Ovary (tissue), 10 donors: ENCODE measurements at regions of chr16 and their contacts with region 1.

Region 1: GRCh38 chr16:55364811-55365210 is 40.8 kb downstream of the IRX6 start:
- DNase-seq: no peak
- H3K4me3 ChIP-seq: no peak overlapping the region
- H3K27ac ChIP-seq: no peak overlapping the region
- H3K4me1 ChIP-seq: peaks cover 4% of the 10 kb centered on the region
- H3K27me3 ChIP-seq: no peaks in the 10 kb centered on the region
- CTCF ChIP-seq: no peak
- EP300 ChIP-seq: no peak
- POLR2A ChIP-seq: no peak

Region 2: DNA sequence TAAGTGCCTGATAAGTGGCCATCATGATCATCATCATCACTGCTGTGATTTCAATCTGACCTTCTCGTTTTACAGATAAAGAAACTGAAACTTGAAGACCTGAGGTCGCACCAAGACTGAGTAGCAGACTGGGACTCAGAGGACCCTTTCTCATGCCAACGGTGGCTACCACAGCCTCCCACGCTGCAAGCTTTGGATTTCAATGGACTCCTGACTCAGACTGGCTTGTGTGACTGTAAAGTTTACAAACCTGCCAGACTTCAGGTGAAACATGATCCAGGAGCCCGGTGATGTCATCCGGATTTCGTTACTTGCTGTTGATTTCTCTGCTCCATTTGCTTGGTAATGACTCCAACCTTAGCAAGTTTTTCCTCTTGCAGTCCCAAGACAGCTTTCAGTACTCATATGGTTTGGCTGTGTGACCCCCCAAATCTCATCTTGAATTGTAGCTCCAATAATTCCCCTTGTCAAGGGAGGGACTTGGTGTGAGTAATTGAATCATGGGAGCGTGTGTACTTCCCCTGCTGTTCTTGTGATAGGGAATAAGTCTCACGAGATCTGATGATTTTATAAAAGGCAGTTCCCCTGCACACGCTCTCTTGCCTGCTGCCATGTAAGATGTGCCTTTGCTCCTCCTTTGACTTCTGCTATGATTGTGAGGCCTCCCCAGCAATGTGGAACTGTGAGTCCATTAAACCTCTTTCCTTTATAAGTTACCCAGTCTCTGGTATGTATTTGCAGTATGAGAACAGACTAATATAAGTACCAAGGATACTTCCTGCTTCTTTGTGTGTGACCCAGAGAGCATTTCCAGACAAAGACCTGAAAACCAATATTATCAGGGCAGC is 67.5 kb before region 1 on chr16:
- intact Hi-C with region 1: no loop called
- DNase-seq: no peak
- H3K4me3 ChIP-seq: no peak overlapping the region
- H3K27ac ChIP-seq: no peak overlapping the region
- H3K4me1 ChIP-seq: no peaks in the 10 kb centered on the region
- H3K27me3 ChIP-seq: no peaks in the 10 kb centered on the region
- CTCF ChIP-seq: no peak
- EP300 ChIP-seq: no peak
- POLR2A ChIP-seq: no peak

Region 3: DNA sequence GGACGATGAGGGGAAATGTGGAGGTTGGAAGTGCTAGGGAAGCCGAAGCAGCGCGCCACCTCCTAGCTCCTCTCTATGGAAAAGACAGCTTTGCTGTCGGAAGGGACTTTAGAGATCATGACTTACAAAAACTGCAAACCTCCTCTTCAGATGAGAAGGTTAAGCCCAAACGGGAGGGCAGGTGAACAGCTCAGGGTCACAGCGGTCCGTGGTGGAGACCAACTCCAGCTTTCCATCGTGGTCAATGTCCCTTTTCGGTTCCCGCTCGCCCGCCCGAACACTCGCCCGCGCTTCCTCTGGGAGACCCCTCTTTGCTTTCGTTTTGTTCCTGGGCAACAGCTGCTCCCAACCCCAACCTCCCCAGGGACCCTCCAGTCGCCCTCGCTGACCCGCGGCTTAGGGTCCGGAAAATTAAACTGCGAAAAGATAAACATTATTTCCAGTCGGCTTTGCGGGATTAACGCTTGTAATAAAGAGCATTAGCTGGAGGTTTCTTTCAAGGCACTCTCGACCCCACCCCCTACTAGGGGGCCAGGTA is 33.1 kb before region 1 on chr16:
- intact Hi-C with region 1: loop called in 1 of 4 experiments (anchors 1 kb)
- DNase-seq: no peak
- H3K4me3 ChIP-seq: no peak overlapping the region
- H3K27ac ChIP-seq: no peak overlapping the region
- H3K4me1 ChIP-seq: no peaks in the 10 kb centered on the region
- H3K27me3 ChIP-seq: no peaks in the 10 kb centered on the region
- CTCF ChIP-seq: no peak
- EP300 ChIP-seq: no peak
- POLR2A ChIP-seq: no peak